B cell (primary cell): ENCODE measurements at regions of chr2 and their contacts with region 1.

Region 1: GRCh38 chr2:64330281-64331113 is 123.5 kb upstream of the LGALSL start:
- DNase-seq: peak; percentile 86
- ATAC-seq: no peak
- H3K4me3 ChIP-seq: no peak overlapping the region
- H3K4me3 Mint-ChIP-seq: peak overlapping the region; percentile 16
- H3K27ac ChIP-seq: no peak overlapping the region
- H3K27ac Mint-ChIP-seq: peak overlapping the region; percentile 33
- H3K4me1 ChIP-seq: peaks cover 24 to 36% of the 10 kb centered on the region in 2 donors
- H3K4me1 Mint-ChIP-seq: peaks cover 35% of the 10 kb centered on the region
- H3K27me3 ChIP-seq: no peaks in the 10 kb centered on the region
- H3K27me3 Mint-ChIP-seq: no peaks in the 10 kb centered on the region
- CTCF ChIP-seq: peak; percentile 94

Region 2: DNA sequence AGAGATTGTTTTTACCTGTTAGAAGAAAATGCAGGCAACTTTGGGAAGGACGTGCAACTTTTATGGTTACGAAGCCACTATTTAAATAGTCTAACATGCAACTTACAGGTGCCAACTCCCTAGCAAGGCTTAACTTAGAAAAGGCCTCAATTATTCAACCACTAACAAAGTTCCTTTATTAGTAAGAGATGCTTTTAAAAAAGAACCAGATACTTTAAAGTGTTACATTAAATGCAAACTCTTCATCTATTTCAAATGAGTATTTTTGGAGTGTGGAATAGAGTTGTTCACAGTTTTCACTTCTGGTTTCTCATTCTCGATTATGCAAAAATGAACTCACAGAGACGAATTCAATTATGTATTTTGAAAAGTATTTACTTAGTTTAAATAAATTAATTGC is 238.0 kb before region 1 on chr2:
- CTCF ChIA-PET with region 1: interaction called, 15 read pairs
- POLR2A ChIA-PET with region 1: interaction called, 5 read pairs
- intact Hi-C with region 1: loop called (anchors 5 kb)
- DNase-seq: peak; percentile 26
- ATAC-seq: no peak
- H3K4me3 ChIP-seq: peak overlapping the region in 2 of 5 experiments; percentile 6 to 38
- H3K4me3 Mint-ChIP-seq: peak overlapping the region; percentile 66
- H3K27ac ChIP-seq: peak overlapping the region; percentile 54 to 66
- H3K27ac Mint-ChIP-seq: peak overlapping the region; percentile 75
- H3K4me1 ChIP-seq: peaks cover 39 to 40% of the 10 kb centered on the region in 2 donors
- H3K4me1 Mint-ChIP-seq: peaks cover 58% of the 10 kb centered on the region
- H3K27me3 ChIP-seq: no peaks in the 10 kb centered on the region
- H3K27me3 Mint-ChIP-seq: no peaks in the 10 kb centered on the region
- CTCF ChIP-seq: no peak

Region 3: DNA sequence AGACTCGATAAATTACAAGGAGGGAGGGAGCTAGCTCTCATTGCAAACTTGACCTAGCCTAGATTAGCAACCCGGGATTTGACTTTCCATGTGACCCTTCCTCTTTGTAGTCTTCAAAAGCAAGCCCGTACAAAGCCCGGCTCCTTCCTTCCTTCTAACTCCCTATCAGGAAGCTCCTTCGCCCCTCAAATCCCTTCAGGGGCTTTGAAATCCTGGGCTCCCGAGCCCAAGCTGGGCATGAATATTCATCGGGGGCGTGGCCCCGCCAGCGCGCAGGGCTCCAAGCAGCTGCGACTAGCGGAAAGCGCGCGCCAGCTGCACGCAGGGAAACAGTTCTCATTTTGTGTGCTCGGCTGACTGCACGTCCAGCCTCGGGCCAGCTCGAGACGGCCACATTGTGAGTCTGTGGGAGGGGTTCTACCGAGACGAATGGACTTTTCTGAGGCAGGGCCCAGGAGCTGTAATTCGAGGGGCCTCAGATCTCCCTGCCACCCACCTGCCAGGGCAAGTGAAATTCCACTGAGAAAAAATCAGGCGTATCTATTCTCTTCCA is 102.3 kb before region 1 on chr2:
- CTCF ChIA-PET with region 1: interaction called, 26 read pairs
- POLR2A ChIA-PET with region 1: interaction called, 5 read pairs
- intact Hi-C with region 1: loop called (anchors 5 kb)
- DNase-seq: peak; percentile 75
- ATAC-seq: peak; percentile 98
- H3K4me3 ChIP-seq: peak overlapping the region; percentile 46 to 81 (median 72)
- H3K4me3 Mint-ChIP-seq: peak overlapping the region; percentile 98
- H3K27ac ChIP-seq: peak overlapping the region; percentile 60 to 63
- H3K27ac Mint-ChIP-seq: peak overlapping the region; percentile 98
- H3K4me1 ChIP-seq: peaks cover 25 to 28% of the 10 kb centered on the region in 2 donors
- H3K4me1 Mint-ChIP-seq: peaks cover 32% of the 10 kb centered on the region
- H3K27me3 ChIP-seq: no peaks in the 10 kb centered on the region
- H3K27me3 Mint-ChIP-seq: no peaks in the 10 kb centered on the region
- CTCF ChIP-seq: no peak

Region 4: GRCh38 chr2:64344976-64345576 is 14.6 kb after region 1 on chr2:
- CTCF ChIA-PET with region 1: interaction called, 33 read pairs
- POLR2A ChIA-PET with region 1: no interaction called
- intact Hi-C with region 1: no loop called
- DNase-seq: no peak
- ATAC-seq: no peak
- H3K4me3 ChIP-seq: no peak overlapping the region
- H3K4me3 Mint-ChIP-seq: no peak overlapping the region
- H3K27ac ChIP-seq: no peak overlapping the region
- H3K27ac Mint-ChIP-seq: no peak overlapping the region
- H3K4me1 ChIP-seq: no peaks in the 10 kb centered on the region
- H3K4me1 Mint-ChIP-seq: peaks cover 2% of the 10 kb centered on the region
- H3K27me3 ChIP-seq: no peaks in the 10 kb centered on the region
- H3K27me3 Mint-ChIP-seq: peaks cover 4% of the 10 kb centered on the region
- CTCF ChIP-seq: no peak

Region 5: GRCh38 chr2:64523666-64524603 is 193.4 kb after region 1 on chr2 and contains the start of gene AFTPH:
- CTCF ChIA-PET with region 1: interaction called, 71 read pairs
- POLR2A ChIA-PET with region 1: interaction called, 5 read pairs
- intact Hi-C with region 1: no loop called
- DNase-seq: peak; percentile 99
- ATAC-seq: peak; percentile 89
- H3K4me3 ChIP-seq: peak within 1 kb of the TSS; percentile 74 to 99 (median 97)
- H3K4me3 Mint-ChIP-seq: peak within 1 kb of the TSS; percentile 98
- H3K27ac ChIP-seq: peak within 1 kb of the TSS; percentile 92 to 97
- H3K27ac Mint-ChIP-seq: peak within 1 kb of the TSS; percentile 100
- H3K4me1 ChIP-seq: peaks cover 34 to 36% of the 10 kb centered on the region in 2 donors
- H3K4me1 Mint-ChIP-seq: peaks cover 45% of the 10 kb centered on the region
- H3K27me3 ChIP-seq: no peaks in the 10 kb centered on the region
- H3K27me3 Mint-ChIP-seq: no peaks in the 10 kb centered on the region
- CTCF ChIP-seq: no peak
- total RNA-seq, gene AFTPH: 91.6 and 94.1 TPM in 2 replicates

Region 6: GRCh38 chr2:64914735-64915509 is 584.4 kb after region 1 on chr2:
- CTCF ChIA-PET with region 1: interaction called, 10 read pairs
- POLR2A ChIA-PET with region 1: no interaction called
- intact Hi-C with region 1: no loop called
- DNase-seq: peak; percentile 80
- ATAC-seq: peak; percentile 79
- H3K4me3 ChIP-seq: no peak overlapping the region
- H3K4me3 Mint-ChIP-seq: peak overlapping the region; percentile 62
- H3K27ac ChIP-seq: peak overlapping the region in 1 of 2 donors; percentile 58
- H3K27ac Mint-ChIP-seq: peak overlapping the region; percentile 66
- H3K4me1 ChIP-seq: peaks cover 57 to 68% of the 10 kb centered on the region in 2 donors
- H3K4me1 Mint-ChIP-seq: peaks cover 59% of the 10 kb centered on the region
- H3K27me3 ChIP-seq: no peaks in the 10 kb centered on the region
- H3K27me3 Mint-ChIP-seq: no peaks in the 10 kb centered on the region
- CTCF ChIP-seq: no peak